ENCODE measurements at regions of chr2 and their contacts with region 1.

Region 1: GRCh38 chr2:168231609-168232241 is 15.7 kb downstream of the STK39 start:
- DNase-seq: no peak
- ATAC-seq: no peak
- H3K4me3 ChIP-seq: no peak overlapping the region
- H3K4me3 Mint-ChIP-seq: no peak overlapping the region
- H3K27ac ChIP-seq: no peak overlapping the region
- H3K27ac Mint-ChIP-seq: no peak overlapping the region
- H3K4me1 ChIP-seq: peaks cover 12% of the 10 kb centered on the region
- H3K4me1 Mint-ChIP-seq: peaks cover 30% of the 10 kb centered on the region
- H3K27me3 ChIP-seq: no peaks in the 10 kb centered on the region
- H3K27me3 Mint-ChIP-seq: no peaks in the 10 kb centered on the region
- CTCF ChIP-seq: no peak

Region 2: GRCh38 chr2:168174756-168175155 is 57.0 kb before region 1 on chr2:
- CTCF ChIA-PET with region 1: no interaction called
- POLR2A ChIA-PET with region 1: no interaction called
- intact Hi-C with region 1: no loop called
- DNase-seq: peak in 4 of 14 experiments; percentile 10 to 65 (median 52)
- ATAC-seq: peak; percentile 62
- H3K4me3 ChIP-seq: no peak overlapping the region
- H3K4me3 Mint-ChIP-seq: peak overlapping the region; percentile 30
- H3K27ac ChIP-seq: no peak overlapping the region
- H3K27ac Mint-ChIP-seq: peak overlapping the region; percentile 6
- H3K4me1 ChIP-seq: peaks cover 9% of the 10 kb centered on the region
- H3K4me1 Mint-ChIP-seq: peaks cover 50% of the 10 kb centered on the region
- H3K27me3 ChIP-seq: no peaks in the 10 kb centered on the region
- H3K27me3 Mint-ChIP-seq: no peaks in the 10 kb centered on the region
- CTCF ChIP-seq: no peak

Region 3: DNA sequence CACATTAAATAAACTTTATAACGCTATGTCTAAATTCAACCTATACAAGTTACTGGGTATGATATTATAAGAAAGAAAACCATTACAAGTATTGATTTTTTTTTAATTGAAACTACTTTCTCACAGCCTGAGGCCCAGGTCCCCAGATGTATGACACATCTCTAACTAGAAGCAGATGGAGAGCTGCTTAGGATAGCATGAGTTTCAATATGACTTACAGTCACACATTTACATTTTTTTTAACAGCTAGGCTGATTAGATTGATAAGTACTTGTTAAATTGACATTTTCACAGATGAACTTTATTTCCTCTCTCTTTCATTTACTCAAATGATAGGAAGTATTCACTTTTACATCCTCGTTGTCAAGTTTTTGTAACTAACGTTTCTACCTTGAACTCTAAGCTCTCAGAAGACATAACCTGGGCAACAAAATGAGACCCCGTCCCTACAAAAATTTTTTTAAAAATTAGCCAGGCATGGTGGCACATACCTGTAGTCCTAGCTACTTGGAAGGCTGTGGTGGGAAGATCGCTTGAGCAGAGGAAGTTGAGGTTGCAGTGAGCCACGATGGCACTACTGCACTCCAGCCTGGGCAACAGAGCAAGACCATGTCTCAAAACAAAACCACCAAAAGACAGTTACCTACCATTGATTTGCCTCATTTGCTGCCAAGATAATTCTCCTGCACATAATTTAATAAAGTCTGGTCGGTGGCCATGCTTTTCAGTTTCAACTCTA is 36.8 kb before region 1 on chr2:
- CTCF ChIA-PET with region 1: no interaction called
- POLR2A ChIA-PET with region 1: no interaction called
- intact Hi-C with region 1: loop called in 1 of 2 experiments (anchors 5 kb)
- DNase-seq: peak in 5 of 14 experiments; percentile 3 to 61 (median 36)
- ATAC-seq: peak; percentile 33
- H3K4me3 ChIP-seq: no peak overlapping the region
- H3K4me3 Mint-ChIP-seq: peak overlapping the region; percentile 53
- H3K27ac ChIP-seq: peak overlapping the region; percentile 23 to 34
- H3K27ac Mint-ChIP-seq: peak overlapping the region; percentile 81
- H3K4me1 ChIP-seq: peaks cover 43% of the 10 kb centered on the region
- H3K4me1 Mint-ChIP-seq: peaks cover 49% of the 10 kb centered on the region
- H3K27me3 ChIP-seq: no peaks in the 10 kb centered on the region
- H3K27me3 Mint-ChIP-seq: no peaks in the 10 kb centered on the region
- CTCF ChIP-seq: no peak

Region 4: GRCh38 chr2:168427451-168427850 is 195.7 kb after region 1 on chr2:
- CTCF ChIA-PET with region 1: no interaction called
- POLR2A ChIA-PET with region 1: no interaction called
- intact Hi-C with region 1: no loop called
- DNase-seq: no peak
- ATAC-seq: no peak
- H3K4me3 ChIP-seq: no peak overlapping the region
- H3K4me3 Mint-ChIP-seq: no peak overlapping the region
- H3K27ac ChIP-seq: no peak overlapping the region
- H3K27ac Mint-ChIP-seq: no peak overlapping the region
- H3K4me1 ChIP-seq: peaks cover 3% of the 10 kb centered on the region
- H3K4me1 Mint-ChIP-seq: peaks cover 40% of the 10 kb centered on the region
- H3K27me3 ChIP-seq: no peaks in the 10 kb centered on the region
- H3K27me3 Mint-ChIP-seq: no peaks in the 10 kb centered on the region
- CTCF ChIP-seq: no peak